Motor neuron (in vitro differentiated cells): ENCODE measurements at regions of chr1 and their contacts with region 1.

Region 1: DNA sequence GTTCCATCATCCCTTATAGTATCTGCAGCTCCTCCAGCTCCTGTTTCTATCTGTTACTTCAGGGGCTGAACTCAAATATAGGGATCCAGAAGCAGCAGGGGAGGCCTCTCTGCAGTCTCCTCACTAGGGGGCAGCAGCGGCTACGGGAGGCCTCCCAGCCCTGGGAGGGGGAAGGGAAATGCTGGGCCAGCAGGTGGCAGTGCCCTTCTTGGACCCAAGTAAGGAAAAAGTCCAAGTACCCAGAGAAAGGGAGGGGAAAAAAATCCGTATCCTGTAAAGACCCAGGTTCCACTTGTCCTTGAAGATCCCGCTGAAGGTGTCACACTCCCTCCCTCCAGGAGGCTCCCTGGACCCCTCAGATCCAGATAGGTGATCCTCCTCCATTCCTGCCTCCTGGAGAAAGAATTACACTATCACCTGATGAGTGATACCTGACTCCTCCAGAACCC is 14.1 kb upstream of the NUAK2 start:
- ATAC-seq: peak; percentile 89 to 100 (median 94)
- H3K4me3 ChIP-seq: no peak overlapping the region
- H3K27ac ChIP-seq: no peak overlapping the region
- H3K4me1 ChIP-seq: peaks cover 0 to 4% of the 10 kb centered on the region in 2 donors

Region 2: GRCh38 chr1:205523891-205524793 is 188.5 kb after region 1 on chr1:
- in situ Hi-C with region 1: loop called in 2 of 9 experiments (anchors 5 to 10 kb)
- ATAC-seq: peak; percentile 21 to 76 (median 44)
- H3K4me3 ChIP-seq: no peak overlapping the region
- H3K27ac ChIP-seq: no peak overlapping the region
- H3K4me1 ChIP-seq: peaks cover 39 to 58% of the 10 kb centered on the region in 2 donors

Region 3: GRCh38 chr1:205528887-205529825 is 193.5 kb after region 1 on chr1:
- in situ Hi-C with region 1: loop called in 2 of 9 experiments (anchors 5 to 10 kb)
- ATAC-seq: peak; percentile 83 to 94 (median 87)
- H3K4me3 ChIP-seq: peak overlapping the region in 4 of 5 donors; percentile 4 to 23 (median 4)
- H3K27ac ChIP-seq: no peak overlapping the region
- H3K4me1 ChIP-seq: peaks cover 21 to 40% of the 10 kb centered on the region in 2 donors